ENCODE measurements at regions of chr2 and their contacts with region 1.

Region 1: GRCh38 chr2:109128048-109128465 is 948 bp upstream of the SH3RF3 start:
- DNase-seq: peak; percentile 85
- H3K4me3 Mint-ChIP-seq: peak overlapping the region; percentile 69
- H3K27ac Mint-ChIP-seq: no peak overlapping the region
- H3K4me1 Mint-ChIP-seq: peaks cover 22% of the 10 kb centered on the region
- H3K27me3 Mint-ChIP-seq: peaks cover 44% of the 10 kb centered on the region
- CTCF ChIP-seq: peak; percentile 74

Region 2: DNA sequence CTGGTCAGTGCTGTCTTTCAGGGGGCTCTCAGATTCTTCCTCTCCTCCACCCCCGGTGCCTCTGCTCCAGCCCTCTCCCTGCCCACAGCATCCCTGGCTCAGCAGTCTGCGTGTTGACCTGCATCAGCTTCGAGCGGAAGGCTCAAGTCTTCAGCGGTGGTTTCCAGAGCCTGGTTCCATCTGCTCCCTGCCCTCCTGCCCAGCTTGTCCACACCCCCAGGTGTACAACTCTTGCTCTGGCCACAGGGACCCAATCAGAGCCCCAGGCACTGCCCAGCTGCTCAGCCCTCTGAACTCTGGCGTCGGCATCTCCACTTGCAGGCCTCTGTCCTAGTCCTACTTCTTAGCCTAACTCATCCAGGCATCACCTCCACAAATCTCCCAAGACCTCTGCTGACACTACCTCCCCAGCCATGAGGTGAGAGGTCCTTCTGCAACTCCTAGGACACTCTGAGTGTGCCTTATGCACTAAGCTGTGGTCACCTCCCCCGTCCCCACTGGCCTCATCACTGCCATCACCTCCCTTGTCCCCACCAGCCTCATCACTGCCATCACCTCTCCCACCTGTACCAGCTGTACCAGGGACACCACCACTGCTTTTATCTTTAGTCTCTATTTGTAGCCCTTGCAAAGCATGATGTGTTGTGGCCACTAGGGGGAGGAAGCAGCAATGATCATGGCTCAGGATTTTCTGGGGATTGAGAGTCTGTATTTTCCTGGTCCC is 200.0 kb before region 1 on chr2:
- CTCF ChIA-PET with region 1: interaction called, 17 read pairs
- intact Hi-C with region 1: no loop called
- DNase-seq: peak; percentile 62
- H3K4me3 Mint-ChIP-seq: no peak overlapping the region
- H3K27ac Mint-ChIP-seq: no peak overlapping the region
- H3K4me1 Mint-ChIP-seq: no peaks in the 10 kb centered on the region
- H3K27me3 Mint-ChIP-seq: peaks cover 75% of the 10 kb centered on the region
- CTCF ChIP-seq: peak; percentile 73

Region 3: DNA sequence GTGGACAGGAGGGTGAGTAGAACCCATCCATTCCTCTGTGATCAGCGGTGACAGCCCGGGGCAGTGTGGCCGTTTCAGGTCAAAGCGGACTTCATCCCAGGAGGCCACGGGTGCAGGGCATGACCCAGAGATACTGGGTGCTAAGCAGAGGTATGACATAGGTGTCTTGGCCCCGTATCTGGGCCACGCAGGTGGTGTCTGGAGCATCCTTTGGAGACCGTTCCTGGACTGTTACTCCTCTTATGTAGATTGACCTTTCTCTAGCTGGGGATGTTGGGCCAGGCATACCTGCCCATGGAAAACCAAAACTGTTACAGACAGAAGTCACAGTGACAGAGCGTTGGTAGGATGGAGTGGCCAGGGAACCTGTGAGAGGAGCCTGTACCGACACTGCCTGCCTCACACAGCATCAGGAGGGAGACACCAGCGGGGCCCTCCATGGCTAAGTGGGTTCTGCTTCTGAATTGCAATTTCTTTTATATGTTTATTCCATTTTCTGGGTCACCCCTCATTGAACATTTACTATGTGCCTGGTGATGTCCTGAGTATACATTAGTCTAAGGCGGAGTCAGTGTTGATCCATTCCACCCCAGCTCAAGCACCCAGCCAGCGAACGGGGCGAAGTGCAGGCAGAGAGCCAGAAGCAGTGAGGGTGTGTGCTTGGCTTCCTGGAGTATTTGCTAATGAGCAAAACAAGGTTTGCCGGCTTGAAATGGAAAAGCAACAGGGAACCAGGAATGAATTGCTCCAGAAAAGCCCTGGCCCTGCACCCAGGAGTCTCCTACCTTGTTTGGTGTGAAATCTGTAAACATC is 142.6 kb after region 1 on chr2:
- CTCF ChIA-PET with region 1: no interaction called
- intact Hi-C with region 1: loop called (anchors 5 kb)
- DNase-seq: no peak
- H3K4me3 Mint-ChIP-seq: no peak overlapping the region
- H3K27ac Mint-ChIP-seq: no peak overlapping the region
- H3K4me1 Mint-ChIP-seq: peaks cover 8% of the 10 kb centered on the region
- H3K27me3 Mint-ChIP-seq: peaks cover 95% of the 10 kb centered on the region
- CTCF ChIP-seq: no peak

Region 4: DNA sequence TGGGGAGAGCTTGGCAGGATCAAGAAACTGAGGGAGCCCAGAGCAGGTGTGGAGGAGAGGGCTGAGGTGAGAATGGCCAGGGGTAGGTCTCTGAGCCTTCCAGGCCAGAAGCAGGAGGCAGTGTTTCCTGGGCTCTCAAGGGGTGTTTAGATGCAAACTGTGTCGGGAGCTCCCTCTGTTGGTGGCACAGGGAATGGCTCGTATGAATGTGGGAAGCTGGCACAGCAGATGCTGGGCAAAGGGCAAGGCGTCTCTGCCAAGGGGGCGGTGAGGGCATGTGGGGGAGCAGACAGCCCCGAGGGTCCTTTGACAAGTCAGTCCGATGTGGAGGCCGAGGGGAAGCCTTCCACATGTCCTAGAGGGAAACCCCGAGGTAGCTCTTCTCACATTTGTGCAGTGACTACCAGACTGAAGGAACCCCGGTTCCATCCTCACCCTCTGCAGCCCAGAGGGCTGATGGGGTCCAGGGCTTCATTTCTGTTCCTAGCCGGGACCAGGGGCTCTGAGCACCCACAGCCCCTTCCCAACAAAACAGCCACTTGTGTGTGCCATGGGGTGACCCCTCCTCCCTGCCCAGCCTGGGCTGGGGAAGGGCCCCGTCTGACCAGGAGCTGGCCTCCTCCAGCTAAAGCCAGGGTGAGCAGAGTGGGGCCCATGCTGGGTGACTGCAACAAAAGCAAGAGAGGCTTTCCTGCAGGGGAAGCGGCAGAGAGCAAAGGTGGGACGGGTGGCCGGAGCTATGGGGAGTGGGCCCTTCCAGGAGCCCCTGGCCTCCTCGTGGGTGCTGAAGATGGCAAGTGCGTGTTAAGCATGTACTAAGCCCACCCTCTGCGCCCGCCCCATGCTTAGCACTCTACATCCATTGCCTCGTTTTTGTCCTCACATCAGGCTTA is 382.3 kb after region 1 on chr2:
- CTCF ChIA-PET with region 1: interaction called, 3 read pairs
- intact Hi-C with region 1: loop called (anchors 1 kb)
- DNase-seq: peak; percentile 79
- H3K4me3 Mint-ChIP-seq: no peak overlapping the region
- H3K27ac Mint-ChIP-seq: no peak overlapping the region
- H3K4me1 Mint-ChIP-seq: no peaks in the 10 kb centered on the region
- H3K27me3 Mint-ChIP-seq: peaks cover 59% of the 10 kb centered on the region
- CTCF ChIP-seq: peak; percentile 70